Psoas muscle (tissue), 8 donors: ENCODE measurements at regions of chr5 and their contacts with region 1.

Region 1: DNA sequence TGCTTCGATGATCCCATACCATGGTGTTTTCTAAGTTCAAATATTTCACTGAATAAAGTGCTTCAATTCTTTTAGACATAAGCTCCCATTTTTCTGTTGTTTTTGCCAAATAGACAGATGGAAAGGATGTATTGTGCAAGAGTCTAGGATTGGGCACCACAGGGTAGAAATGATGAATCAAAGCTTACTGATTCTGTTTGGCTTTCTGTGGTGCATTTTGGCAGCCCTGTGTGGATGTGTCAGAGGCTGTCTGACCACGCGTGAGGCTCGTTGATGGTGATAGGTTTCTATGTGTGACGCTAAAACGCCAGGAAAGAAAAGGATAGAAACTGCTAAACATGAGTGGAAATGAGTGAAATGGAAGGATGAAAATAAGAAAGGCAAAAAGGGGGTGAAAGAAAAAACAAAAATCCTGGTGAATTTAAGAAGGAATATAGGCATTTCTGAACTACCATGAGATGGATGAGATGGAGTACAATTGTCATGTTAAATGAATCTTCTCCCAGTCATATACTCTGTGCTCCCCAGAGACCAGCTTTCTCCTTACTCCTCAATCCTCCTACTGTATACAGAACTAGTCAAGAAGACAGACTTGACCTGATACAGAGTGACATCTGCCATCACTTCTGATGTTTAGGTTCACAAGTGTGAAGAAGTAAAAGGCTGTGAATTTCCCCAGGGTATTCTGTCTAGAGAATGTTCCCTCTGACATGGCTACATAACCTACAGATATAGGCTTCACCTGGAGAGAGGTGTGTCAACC is 54.4 kb downstream of the ANKH start:
- DNase-seq: peak; percentile 54 to 66
- ATAC-seq: peak; percentile 60 to 82 (median 78)
- H3K4me3 ChIP-seq: no peak overlapping the region
- H3K27ac ChIP-seq: peak overlapping the region; percentile 34
- H3K4me1 ChIP-seq: peaks cover 55% of the 10 kb centered on the region
- H3K27me3 ChIP-seq: no peaks in the 10 kb centered on the region
- CTCF ChIP-seq: no peak

Region 2: GRCh38 chr5:14727428-14727865 is 89.7 kb before region 1 on chr5:
- intact Hi-C with region 1: loop called in 1 of 2 experiments (anchors 5 kb)
- DNase-seq: peak; percentile 71 to 84
- ATAC-seq: peak; percentile 80 to 87 (median 84)
- H3K4me3 ChIP-seq: peak overlapping the region; percentile 4
- H3K27ac ChIP-seq: peak overlapping the region; percentile 75
- H3K4me1 ChIP-seq: peaks cover 56% of the 10 kb centered on the region
- H3K27me3 ChIP-seq: no peaks in the 10 kb centered on the region
- CTCF ChIP-seq: peak; percentile 95

Region 3: GRCh38 chr5:14760548-14761017 is 56.6 kb before region 1 on chr5:
- intact Hi-C with region 1: loop called in 1 of 2 experiments (anchors 5 kb)
- DNase-seq: peak; percentile 44 to 83
- ATAC-seq: peak; percentile 94 to 96 (median 95)
- H3K4me3 ChIP-seq: no peak overlapping the region
- H3K27ac ChIP-seq: peak overlapping the region; percentile 82
- H3K4me1 ChIP-seq: peaks cover 53% of the 10 kb centered on the region
- H3K27me3 ChIP-seq: no peaks in the 10 kb centered on the region
- CTCF ChIP-seq: no peak

Region 4: GRCh38 chr5:14861123-14861765 is 44.1 kb after region 1 on chr5:
- intact Hi-C with region 1: loop called in 1 of 2 experiments (anchors 5 kb)
- DNase-seq: no peak
- ATAC-seq: no peak
- H3K4me3 ChIP-seq: no peak overlapping the region
- H3K27ac ChIP-seq: peak overlapping the region; percentile 38
- H3K4me1 ChIP-seq: peaks cover 48% of the 10 kb centered on the region
- H3K27me3 ChIP-seq: no peaks in the 10 kb centered on the region
- CTCF ChIP-seq: no peak